Activated T-helper 1 cell treated with anti-CD3 and anti-CD28 coated beads, Interleukin-12 subunit alpha, Interleukin-12 subunit beta, Interleukin-2, Interleukin-4 antibody, amounts not matched to agents 30 ng/mL and 10 ng/mL and 1 ng/mL, durations not matched to agents 14 hours and 24 hours and 36 hours (primary cell): ENCODE measurements at regions of chr2 and their contacts with region 1.

Region 1: DNA sequence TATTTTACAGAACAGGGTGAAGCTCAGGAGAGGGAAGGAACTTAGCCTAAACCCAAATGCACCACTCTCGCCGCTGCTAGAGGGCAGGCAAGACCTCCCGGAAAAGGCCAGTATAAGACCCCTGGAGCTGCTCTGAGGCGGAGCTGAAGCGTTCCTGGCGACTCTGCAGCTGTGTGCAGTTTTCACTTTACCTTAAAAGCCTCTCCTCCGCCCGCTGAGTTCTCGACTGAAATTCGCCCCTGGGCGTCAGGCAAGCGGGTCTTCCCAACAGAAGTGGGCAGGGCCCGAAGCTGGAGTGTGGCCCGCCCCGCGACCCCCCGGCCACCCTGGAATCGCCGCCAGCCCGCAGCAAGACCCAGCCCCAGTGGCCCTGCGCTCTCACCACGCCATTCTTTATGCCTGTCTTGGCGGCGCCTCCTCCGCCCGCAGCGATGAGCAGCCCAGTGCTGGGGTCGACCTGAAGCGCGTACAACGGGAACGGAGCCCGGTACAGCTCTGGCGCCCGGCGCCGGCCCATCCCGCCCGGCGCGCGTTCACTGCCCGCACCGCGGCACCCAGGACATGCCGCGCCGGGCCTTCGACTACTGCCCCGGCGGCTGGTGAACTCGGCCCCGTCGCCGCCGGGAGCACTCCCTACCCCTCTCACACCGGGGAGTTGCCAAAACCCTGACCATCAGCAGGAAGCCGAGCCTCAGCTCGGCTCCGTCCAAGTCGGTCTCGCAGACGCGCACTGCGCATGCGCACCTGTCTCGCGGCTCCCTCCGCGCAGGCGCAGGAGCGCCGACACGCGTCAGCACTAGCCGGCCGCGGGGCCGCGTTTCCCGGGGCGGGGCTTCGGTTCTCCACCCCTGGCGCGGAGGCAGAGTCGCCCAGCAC is at the start of gene PREB:
- DNase-seq: peak; percentile 99
- H3K4me3 Mint-ChIP-seq: peak within 1 kb of the TSS; percentile 95
- H3K27ac Mint-ChIP-seq: peak within 1 kb of the TSS; percentile 98
- H3K4me1 Mint-ChIP-seq: peaks cover 12% of the 10 kb centered on the region
- H3K27me3 Mint-ChIP-seq: no peaks in the 10 kb centered on the region
- total RNA-seq, gene PREB: 95.9 and 97.1 TPM in 2 replicates

Region 2: DNA sequence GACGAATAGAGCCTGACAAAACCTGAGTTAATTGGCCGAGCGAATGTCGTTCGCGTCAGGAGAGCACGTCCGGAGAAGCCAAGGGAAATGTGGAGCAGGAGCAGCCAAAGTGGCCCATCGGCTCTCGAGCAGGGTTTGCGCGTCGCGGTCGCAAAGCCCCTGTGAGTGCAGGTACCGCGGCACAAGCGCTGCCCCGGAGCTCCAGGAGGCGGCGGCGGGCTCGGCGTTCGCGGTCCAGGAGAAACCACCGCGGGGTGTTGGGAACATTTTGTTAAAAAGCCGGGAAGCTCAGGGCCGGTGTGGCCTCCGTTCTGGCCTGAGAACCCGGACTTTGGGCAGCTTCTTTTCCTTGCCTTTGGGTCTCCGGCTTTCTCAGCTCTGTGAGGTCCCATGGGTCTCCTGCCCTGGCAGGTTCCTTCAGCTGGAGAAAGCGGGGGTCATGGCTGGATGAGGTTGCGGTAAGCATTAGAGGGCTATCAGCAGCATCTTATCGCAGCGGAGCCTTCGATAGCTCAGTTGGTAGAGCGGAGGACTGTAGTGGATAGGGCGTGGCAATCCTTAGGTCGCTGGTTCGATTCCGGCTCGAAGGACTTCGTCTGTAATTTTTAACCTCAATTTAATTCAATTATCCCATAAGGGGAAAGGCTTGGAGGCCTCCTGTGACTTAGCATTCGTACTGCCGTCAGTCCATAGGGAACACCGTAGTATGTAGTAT is 83.7 kb before region 1 on chr2:
- intact Hi-C with region 1: loop called (anchors 5 kb)
- DNase-seq: peak; percentile 88
- H3K4me3 Mint-ChIP-seq: peak overlapping the region; percentile 96
- H3K27ac Mint-ChIP-seq: peak overlapping the region; percentile 99
- H3K4me1 Mint-ChIP-seq: peaks cover 36% of the 10 kb centered on the region
- H3K27me3 Mint-ChIP-seq: peaks cover 7% of the 10 kb centered on the region

Region 3: GRCh38 chr2:27123302-27124231 is 10.6 kb before region 1 on chr2 and contains the start of gene ABHD1:
- intact Hi-C with region 1: loop called (anchors 1 kb)
- DNase-seq: peak; percentile 71
- H3K4me3 Mint-ChIP-seq: peak within 1 kb of the TSS; percentile 88
- H3K27ac Mint-ChIP-seq: peak within 1 kb of the TSS; percentile 55
- H3K4me1 Mint-ChIP-seq: peaks cover 18% of the 10 kb centered on the region
- H3K27me3 Mint-ChIP-seq: peaks cover 31% of the 10 kb centered on the region
- total RNA-seq, gene ABHD1: 0.34 and 0.96 TPM in 2 replicates

Region 4: DNA sequence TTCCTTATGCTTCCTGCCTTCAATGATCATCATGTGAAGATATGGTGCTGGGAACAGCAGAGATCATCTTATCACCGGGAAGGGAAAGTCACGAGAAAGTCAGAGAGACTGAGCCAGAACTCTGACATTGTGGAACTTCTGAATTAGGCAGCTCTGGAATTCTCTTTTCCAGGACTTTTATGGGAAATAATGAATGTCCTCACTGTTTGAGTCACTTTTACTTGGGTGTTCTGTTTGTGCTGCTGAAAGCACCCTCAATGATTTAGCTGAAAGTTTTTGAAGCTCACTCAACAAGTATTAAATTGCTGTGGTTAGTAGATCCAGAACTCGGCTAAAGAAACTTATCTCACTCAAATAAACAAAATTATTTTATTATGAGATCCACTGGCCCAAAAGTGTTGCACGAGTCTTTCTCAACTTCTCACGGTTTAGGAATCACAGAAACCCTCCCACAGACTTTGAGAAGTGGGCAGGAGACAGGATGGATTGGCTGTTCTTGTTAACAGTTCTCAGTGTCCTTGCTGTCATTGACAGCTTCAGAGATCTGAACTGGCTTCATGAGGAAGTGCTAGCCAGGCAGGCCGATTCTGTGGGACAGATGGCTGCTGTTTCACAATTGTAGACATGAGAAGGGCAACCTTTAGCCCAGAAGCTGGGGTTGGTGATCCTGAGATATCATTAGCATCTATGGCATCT is 51.3 kb after region 1 on chr2:
- intact Hi-C with region 1: no loop called
- DNase-seq: no peak
- H3K4me3 Mint-ChIP-seq: no peak overlapping the region
- H3K27ac Mint-ChIP-seq: no peak overlapping the region
- H3K4me1 Mint-ChIP-seq: no peaks in the 10 kb centered on the region
- H3K27me3 Mint-ChIP-seq: peaks cover 21% of the 10 kb centered on the region